Caco-2 (cell line): ENCODE measurements at regions of chr11 and their contacts with region 1.

Region 1: DNA sequence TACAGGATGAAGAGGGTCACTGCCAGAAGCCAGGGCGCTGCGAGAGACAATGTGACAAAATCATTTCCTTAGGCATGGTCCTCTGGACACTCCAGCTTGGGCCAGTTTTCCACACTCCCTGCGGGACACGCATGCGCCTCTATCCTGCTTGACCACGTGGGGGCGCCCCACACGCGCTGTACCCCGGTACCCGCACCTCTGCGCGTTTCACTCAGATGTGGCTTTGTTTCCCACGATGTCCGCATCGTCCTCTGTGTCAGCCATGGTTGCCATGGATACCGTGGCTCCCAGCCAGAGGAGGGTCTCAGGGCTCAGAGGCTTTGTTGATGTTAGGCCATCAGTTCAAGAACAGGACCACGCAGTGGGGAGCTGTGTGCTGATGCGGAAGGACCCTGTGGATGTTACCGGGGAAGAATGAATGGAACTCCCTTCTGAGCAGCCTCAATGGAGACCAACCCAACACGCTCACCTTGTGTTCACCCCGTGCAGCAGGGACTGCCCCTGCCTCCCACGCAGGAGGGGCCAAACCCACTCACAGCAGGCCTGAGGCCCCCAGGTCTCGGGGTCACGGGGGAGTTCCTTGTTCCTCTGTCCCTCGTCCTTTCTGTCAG is 101.1 kb upstream of the SLC22A12 start:
- DNase-seq: peak; percentile 67 to 80
- H3K4me3 ChIP-seq: no peak overlapping the region
- H3K4me3 Mint-ChIP-seq: peak overlapping the region; percentile 62
- H3K27ac Mint-ChIP-seq: no peak overlapping the region
- H3K4me1 ChIP-seq: peaks cover 12% of the 10 kb centered on the region; the same call in 1 of the 2 replicates
- H3K4me1 Mint-ChIP-seq: peaks cover 21% of the 10 kb centered on the region
- H3K27me3 ChIP-seq: no peaks in the 10 kb centered on the region; the same call in 1 of the 2 replicates
- H3K27me3 Mint-ChIP-seq: peaks cover 29% of the 10 kb centered on the region
- CTCF ChIP-seq: peak; percentile 91 to 93

Region 2: DNA sequence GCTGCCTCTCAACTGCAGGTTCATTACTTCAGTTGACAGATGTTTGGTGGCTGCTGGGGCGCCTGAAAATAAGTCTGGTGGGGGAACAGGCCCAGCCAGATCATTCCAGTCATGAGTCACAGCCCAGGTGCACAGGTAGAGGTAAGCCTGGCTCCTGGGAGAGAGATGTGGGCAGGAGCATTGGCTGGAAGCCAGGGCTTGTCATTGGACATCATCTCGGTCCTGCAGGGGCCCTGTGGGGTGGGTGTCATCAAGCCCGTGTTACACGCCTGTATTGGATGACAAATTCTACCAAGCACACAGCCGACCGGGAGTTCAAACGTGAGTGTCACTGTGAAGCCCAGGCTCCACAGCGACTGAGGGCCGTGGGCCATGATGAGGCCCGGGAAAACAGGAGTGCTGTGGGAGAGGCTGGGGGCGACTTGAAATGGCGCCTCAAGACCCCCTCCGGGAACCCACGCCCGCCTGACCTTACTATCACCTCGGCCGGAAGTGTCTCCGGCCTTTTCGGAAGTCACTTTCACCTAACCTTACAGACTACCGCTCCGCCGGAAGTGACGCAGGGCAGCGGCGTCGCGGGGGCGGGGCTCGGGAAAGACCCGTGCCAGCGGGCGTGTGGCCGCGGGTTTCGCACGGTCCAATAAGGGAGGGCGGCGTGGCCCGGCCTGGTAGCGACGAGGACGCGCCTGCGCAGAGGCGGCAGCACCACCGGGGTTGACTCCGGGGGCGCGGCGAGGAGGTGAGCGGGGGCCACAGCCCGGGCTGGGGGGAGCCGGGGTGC is 249.4 kb before region 1 on chr11 and contains the start of gene FKBP2:
- CTCF ChIA-PET with region 1: no interaction called
- POLR2A ChIA-PET with region 1: no interaction called
- intact Hi-C with region 1: no loop called
- DNase-seq: peak; percentile 97 to 99
- H3K4me3 ChIP-seq: peak within 1 kb of the TSS; percentile 95
- H3K4me3 Mint-ChIP-seq: peak within 1 kb of the TSS; percentile 88
- H3K27ac Mint-ChIP-seq: peak within 1 kb of the TSS; percentile 90
- H3K4me1 ChIP-seq: peaks cover 20% of the 10 kb centered on the region
- H3K4me1 Mint-ChIP-seq: peaks cover 15% of the 10 kb centered on the region
- H3K27me3 ChIP-seq: no peaks in the 10 kb centered on the region
- H3K27me3 Mint-ChIP-seq: no peaks in the 10 kb centered on the region
- CTCF ChIP-seq: no peak
- total RNA-seq, gene FKBP2: 70.2 and 76.8 TPM in 2 replicates

Region 3: DNA sequence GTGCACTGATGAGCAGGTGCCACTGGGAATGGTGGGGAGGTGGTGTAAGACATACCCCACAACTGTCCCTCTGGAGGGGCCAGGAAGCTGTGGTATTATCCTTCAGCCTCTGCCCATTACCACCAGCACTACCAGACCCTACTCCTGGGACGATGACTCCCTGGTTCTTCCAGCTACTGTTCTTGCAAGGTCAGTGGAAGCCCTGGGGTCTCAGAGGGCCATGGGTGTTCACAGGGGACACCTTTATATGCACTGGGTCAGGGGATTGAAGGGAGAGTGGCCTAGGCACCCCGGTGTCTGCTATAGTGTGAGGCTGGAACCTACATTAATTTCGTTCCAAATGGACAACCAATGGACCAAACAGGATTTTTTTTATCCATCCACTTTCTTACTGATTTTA is 28.9 kb before region 1 on chr11:
- CTCF ChIA-PET with region 1: no interaction called
- POLR2A ChIA-PET with region 1: no interaction called
- intact Hi-C with region 1: loop called (anchors 1 kb)
- DNase-seq: no peak
- H3K4me3 ChIP-seq: no peak overlapping the region
- H3K4me3 Mint-ChIP-seq: no peak overlapping the region
- H3K27ac Mint-ChIP-seq: no peak overlapping the region
- H3K4me1 ChIP-seq: no peaks in the 10 kb centered on the region
- H3K4me1 Mint-ChIP-seq: no peaks in the 10 kb centered on the region
- H3K27me3 ChIP-seq: no peaks in the 10 kb centered on the region
- H3K27me3 Mint-ChIP-seq: no peaks in the 10 kb centered on the region
- CTCF ChIP-seq: no peak